ENCODE measurements at regions of chr5 and their contacts with region 1.

Region 1: GRCh38 chr5:160787240-160787639 is 64.8 kb downstream of the ATP10B start:
- H3K4me3 Mint-ChIP-seq: no peak overlapping the region
- H3K27ac Mint-ChIP-seq: no peak overlapping the region
- H3K4me1 Mint-ChIP-seq: peaks cover 10% of the 10 kb centered on the region
- H3K27me3 Mint-ChIP-seq: no peaks in the 10 kb centered on the region

Region 2: DNA sequence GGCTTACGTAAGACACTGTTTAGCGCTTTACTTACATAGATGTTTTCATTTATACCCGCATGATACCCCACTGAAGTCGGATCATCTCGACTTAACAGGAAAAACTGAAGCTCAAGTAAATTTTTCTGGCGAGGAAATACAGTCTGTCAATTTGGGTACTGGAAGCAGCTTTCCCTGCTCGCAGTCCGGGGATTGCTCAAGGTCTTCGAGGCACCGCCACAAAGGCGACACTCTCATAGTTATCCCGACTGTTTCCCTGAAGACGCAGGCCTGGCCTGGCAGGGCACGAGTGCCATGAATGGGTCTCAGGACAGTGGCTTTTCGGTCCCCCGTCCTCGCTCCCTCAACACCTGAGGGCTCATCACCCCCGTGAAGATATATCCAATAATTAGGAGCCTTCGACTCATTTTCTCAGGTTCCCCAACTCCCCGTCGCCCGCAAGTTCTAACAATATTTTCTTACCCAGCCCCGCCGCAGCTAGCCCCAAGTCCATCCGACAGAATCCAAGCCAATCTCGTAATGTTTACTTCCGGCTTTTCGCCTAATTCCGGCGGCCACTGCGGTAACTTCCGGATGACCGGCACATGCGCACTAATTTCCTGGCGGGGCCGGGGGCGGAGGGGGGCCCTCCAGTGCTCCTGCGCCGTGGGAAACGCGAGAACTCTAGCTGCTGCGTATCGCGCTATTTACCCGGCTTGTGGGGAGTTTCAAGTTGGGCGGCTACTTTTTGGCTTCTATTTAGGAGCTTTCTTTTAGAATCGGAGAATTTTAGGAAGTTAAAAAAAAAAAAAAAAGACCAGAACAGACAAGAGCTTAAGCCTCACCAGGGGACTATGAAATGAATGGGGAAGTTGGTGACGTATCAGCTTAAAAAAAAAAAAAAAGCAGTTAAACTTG is 368.4 kb before region 1 on chr5 and contains the start of gene SLU7:
- intact Hi-C with region 1: no loop called
- H3K4me3 Mint-ChIP-seq: peak within 1 kb of the TSS; percentile 99
- H3K27ac Mint-ChIP-seq: peak within 1 kb of the TSS; percentile 96
- H3K4me1 Mint-ChIP-seq: peaks cover 51% of the 10 kb centered on the region
- H3K27me3 Mint-ChIP-seq: no peaks in the 10 kb centered on the region

Region 3: DNA sequence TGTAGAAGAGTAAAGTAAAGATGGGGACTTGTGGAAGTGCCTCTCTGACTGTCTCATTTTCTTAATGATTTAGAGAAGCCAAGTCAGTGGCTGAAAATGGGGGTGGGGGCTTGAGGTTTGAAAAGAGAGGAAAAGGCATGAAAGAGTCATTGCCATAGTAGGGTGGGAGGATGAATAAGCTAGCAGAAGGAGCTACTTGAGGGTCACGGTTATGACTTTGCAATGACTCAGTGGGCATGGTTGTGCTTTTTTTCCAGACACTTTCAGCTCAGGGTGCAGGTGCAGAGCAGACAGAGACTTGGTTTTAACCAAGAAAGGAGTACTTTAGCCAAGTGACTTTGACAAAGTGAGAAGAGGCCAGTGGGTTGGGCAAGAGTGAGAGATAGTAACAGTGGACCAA is 247.8 kb before region 1 on chr5:
- intact Hi-C with region 1: no loop called
- H3K4me3 Mint-ChIP-seq: no peak overlapping the region
- H3K27ac Mint-ChIP-seq: no peak overlapping the region
- H3K4me1 Mint-ChIP-seq: no peaks in the 10 kb centered on the region
- H3K27me3 Mint-ChIP-seq: no peaks in the 10 kb centered on the region

Region 4: GRCh38 chr5:160685695-160686094 is 101.5 kb before region 1 on chr5:
- intact Hi-C with region 1: loop called (anchors 10 kb)
- H3K4me3 Mint-ChIP-seq: no peak overlapping the region
- H3K27ac Mint-ChIP-seq: no peak overlapping the region
- H3K4me1 Mint-ChIP-seq: peaks cover 10% of the 10 kb centered on the region
- H3K27me3 Mint-ChIP-seq: peaks cover 1% of the 10 kb centered on the region

Region 5: DNA sequence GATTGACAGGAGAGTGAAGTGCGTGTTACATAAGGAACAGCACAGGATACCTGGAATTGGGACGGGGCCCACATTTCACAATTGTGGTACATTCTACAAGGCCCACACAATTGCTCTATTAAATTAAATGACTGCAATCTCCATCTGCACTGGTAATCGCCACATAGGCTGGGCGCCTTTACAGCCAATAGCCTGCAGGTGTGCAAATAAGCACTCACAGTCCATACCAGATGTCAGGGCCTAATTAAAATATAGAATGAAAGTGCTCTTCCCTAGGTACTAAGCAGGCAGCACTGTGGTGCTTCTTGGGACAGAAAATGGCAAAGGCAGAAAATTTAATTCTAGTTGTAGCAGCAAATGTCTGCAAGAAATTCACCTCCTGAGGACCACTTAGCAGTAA is 17.9 kb before region 1 on chr5:
- intact Hi-C with region 1: no loop called
- H3K4me3 Mint-ChIP-seq: no peak overlapping the region
- H3K27ac Mint-ChIP-seq: no peak overlapping the region
- H3K4me1 Mint-ChIP-seq: no peaks in the 10 kb centered on the region
- H3K27me3 Mint-ChIP-seq: peaks cover 3% of the 10 kb centered on the region

Measured in dendritic cell treated with granulocyte-macrophage colony-stimulating factor and Interleukin-4, amounts not matched to agents 40 ng/mL and 50 ng/mL, for 4 days (primary cell).